PC-9 (cell line): ENCODE measurements at regions of chr12 and their contacts with region 1.

Region 1: GRCh38 chr12:123270214-123271000 is 1.2 kb downstream of the CDK2AP1 start:
- DNase-seq: peak in 1 of 2 experiments; percentile 11
- H3K4me3 ChIP-seq: peak overlapping the region; percentile 68
- H3K27ac ChIP-seq: no peak overlapping the region
- H3K4me1 ChIP-seq: no peaks in the 10 kb centered on the region
- H3K27me3 ChIP-seq: no peaks in the 10 kb centered on the region
- CTCF ChIP-seq: 0 out of 2 replicates have a peak, but pooled peaks have one; percentile 10

Region 2: GRCh38 chr12:123633379-123634141 is 363.2 kb after region 1 on chr12 and contains the starts of genes EIF2B1 and GTF2H3:
- CTCF ChIA-PET with region 1: interaction called, 13 read pairs
- POLR2A ChIA-PET with region 1: no interaction called
- intact Hi-C with region 1: no loop called
- DNase-seq: peak; percentile 91
- H3K4me3 ChIP-seq: peak within 1 kb of the TSS; percentile 98
- H3K27ac ChIP-seq: peak within 1 kb of the TSS; percentile 61
- H3K4me1 ChIP-seq: peaks cover 9% of the 10 kb centered on the region; the same call in 1 of the 2 replicates
- H3K27me3 ChIP-seq: no peaks in the 10 kb centered on the region
- CTCF ChIP-seq: no peak
- total RNA-seq, gene EIF2B1: 43.8 and 47.3 TPM in 2 replicates
- total RNA-seq, gene GTF2H3: 30.3 and 42.9 TPM in 2 replicates

Region 3: GRCh38 chr12:123690191-123690840 is 419.9 kb after region 1 on chr12:
- CTCF ChIA-PET with region 1: no interaction called
- POLR2A ChIA-PET with region 1: no interaction called
- intact Hi-C with region 1: no loop called
- DNase-seq: no peak
- H3K4me3 ChIP-seq: no peak overlapping the region
- H3K27ac ChIP-seq: no peak overlapping the region
- H3K4me1 ChIP-seq: no peaks in the 10 kb centered on the region
- H3K27me3 ChIP-seq: no peaks in the 10 kb centered on the region
- CTCF ChIP-seq: no peak